ENCODE measurements at regions of chr3 and their contacts with region 1.

Region 1: DNA sequence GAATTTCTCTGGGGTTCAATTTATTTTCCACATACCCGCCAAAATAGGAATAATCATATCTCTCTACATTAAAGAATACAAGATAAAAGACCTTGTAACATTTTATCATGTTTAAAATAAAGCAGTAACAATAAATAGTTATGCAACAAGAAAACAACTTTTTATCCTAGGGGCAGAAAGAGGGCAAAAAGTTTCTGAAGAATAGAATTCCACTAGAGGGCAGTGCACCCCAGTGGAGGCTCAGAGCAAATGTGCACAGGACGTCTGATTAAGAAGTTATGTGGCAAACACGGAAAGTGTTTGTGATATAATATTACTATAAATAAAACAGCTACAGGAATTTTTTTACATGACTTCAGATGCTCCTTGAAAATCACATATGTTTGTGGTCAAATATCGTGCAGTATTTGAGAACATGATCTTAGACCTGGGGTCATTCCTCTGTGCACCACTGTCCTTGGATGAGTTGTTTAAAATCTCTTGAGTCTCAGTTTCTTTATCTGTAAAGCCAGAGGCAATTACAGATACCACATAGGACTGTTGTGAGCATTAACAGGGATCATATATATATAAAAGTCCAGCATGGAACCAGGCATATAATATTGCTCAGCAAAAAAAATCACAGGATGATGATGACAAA is 13.2 kb upstream of the PIK3R4 start:
- DNase-seq: peak; percentile 72
- H3K4me3 ChIP-seq: no peak overlapping the region
- H3K27ac ChIP-seq: no peak overlapping the region
- H3K4me1 ChIP-seq: no peaks in the 10 kb centered on the region
- H3K27me3 ChIP-seq: no peaks in the 10 kb centered on the region
- CTCF ChIP-seq: peak; percentile 88

Region 2: GRCh38 chr3:130892759-130893375 is 133.0 kb after region 1 on chr3:
- CTCF ChIA-PET with region 1: interaction called, 5 read pairs
- POLR2A ChIA-PET with region 1: no interaction called
- intact Hi-C with region 1: loop called (anchors 1 kb)
- DNase-seq: peak; percentile 83
- H3K4me3 ChIP-seq: peak overlapping the region; percentile 79
- H3K27ac ChIP-seq: peak overlapping the region; percentile 89
- H3K4me1 ChIP-seq: peaks cover 7% of the 10 kb centered on the region
- H3K27me3 ChIP-seq: no peaks in the 10 kb centered on the region
- CTCF ChIP-seq: peak; percentile 91

Region 3: GRCh38 chr3:131026321-131027178 is 266.7 kb after region 1 on chr3 and contains the starts of genes ASTE1 and NEK11:
- CTCF ChIA-PET with region 1: no interaction called
- POLR2A ChIA-PET with region 1: no interaction called
- intact Hi-C with region 1: loop called (anchors 5 kb)
- DNase-seq: peak; percentile 94
- H3K4me3 ChIP-seq: peak within 1 kb of the TSS; percentile 58
- H3K27ac ChIP-seq: peak within 1 kb of the TSS; percentile 70
- H3K4me1 ChIP-seq: peaks cover 11% of the 10 kb centered on the region
- H3K27me3 ChIP-seq: no peaks in the 10 kb centered on the region
- CTCF ChIP-seq: no peak
- total RNA-seq, gene ASTE1: 7.3 and 8.1 TPM in 2 replicates
- total RNA-seq, gene NEK11: 4.4 and 5.0 TPM in 2 replicates